GM13976 (cell line): ENCODE measurements at regions of chr11 and their contacts with region 1.

Region 1: DNA sequence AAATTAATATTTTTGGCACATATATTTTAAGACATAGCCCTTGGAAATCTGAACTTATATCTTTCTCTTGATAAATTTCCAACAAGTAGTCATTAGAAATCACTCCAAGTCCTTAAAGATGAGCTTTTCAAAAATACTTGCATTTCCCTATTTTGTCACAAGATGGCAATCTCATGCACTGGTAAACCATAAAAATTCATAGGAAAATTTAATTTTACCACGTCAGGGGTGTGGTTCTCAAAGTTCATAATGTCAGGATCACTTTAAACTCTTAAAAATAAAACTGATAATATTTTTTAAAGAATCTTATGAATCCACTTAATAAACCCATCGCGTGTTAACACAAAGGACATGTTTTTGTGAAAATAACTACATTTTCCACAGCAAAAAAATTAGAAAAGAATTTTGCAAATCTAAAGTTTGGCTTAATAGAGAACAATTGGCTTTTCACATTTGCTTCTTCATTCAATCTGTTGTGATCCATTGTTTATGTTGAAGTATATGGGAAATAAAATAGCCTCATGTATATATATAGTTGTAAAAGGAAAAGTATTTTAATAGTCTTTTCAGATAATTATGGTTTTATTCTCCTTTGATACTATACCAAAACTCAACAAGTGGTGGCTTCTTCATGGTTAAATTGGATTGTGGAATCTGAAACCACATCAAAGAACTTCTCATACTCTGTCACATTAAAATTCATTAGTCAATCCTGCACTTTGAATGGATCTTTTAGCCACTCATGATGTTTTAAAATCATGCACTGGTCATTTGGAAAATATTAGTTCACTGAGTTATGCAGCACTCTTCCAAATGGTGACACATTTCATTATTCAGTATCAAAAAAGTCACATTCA is 169.1 kb downstream of the CADM1 start:
- DNase-seq: peak; percentile 6
- CTCF ChIP-seq: peak; percentile 16

Region 2: DNA sequence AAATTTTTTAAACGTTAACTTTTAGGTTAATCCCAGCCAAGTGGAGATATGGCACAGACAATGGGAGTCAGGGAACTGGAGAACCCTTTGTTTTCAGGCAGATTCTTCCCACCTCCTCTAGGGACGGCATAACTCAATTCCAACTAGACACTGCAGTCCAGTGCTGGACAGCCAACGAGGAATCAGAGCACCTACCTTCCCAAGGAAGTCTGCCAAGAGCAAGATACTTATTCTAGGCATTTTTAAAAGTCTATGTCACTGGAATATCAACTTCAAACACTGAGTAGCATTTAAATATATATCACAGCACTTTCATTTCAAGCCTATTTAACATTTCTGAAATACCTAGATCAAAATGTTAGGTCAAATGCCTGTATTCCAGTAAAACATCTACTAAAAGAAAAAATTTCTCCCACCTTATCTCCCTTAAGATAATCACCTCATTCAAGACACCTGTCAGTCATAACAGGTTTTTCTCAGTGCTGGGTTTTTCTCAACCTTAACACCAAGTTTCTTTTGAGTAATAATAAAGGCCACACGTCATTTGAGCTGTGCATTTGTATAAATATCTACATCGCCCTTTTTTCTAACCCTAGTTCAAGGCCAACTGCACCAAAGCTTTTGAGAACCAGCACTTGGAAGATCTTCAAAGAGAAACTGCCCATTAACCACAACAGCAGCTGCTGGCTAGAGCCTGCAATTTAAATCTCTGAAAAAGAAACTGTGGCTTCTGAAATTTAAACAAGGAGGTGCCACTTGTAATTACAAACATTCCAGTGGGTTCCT is 161.9 kb after region 1 on chr11:
- in situ Hi-C with region 1: loop called (anchors 10 kb)
- DNase-seq: peak; percentile 16
- CTCF ChIP-seq: no peak

Region 3: GRCh38 chr11:116281173-116282160 is 946.3 kb after region 1 on chr11:
- in situ Hi-C with region 1: loop called (anchors 10 kb)
- DNase-seq: no peak
- CTCF ChIP-seq: no peak